ENCODE measurements at regions of chr1 and their contacts with region 1.

Region 1: GRCh38 chr1:77683160-77684148 is 996 bp upstream of the ZZZ3 start:
- DNase-seq: peak; percentile 95
- H3K4me3 Mint-ChIP-seq: peak overlapping the region; percentile 98
- H3K27ac Mint-ChIP-seq: peak overlapping the region; percentile 90
- H3K4me1 Mint-ChIP-seq: peaks cover 32% of the 10 kb centered on the region
- H3K27me3 Mint-ChIP-seq: no peaks in the 10 kb centered on the region

Region 2: DNA sequence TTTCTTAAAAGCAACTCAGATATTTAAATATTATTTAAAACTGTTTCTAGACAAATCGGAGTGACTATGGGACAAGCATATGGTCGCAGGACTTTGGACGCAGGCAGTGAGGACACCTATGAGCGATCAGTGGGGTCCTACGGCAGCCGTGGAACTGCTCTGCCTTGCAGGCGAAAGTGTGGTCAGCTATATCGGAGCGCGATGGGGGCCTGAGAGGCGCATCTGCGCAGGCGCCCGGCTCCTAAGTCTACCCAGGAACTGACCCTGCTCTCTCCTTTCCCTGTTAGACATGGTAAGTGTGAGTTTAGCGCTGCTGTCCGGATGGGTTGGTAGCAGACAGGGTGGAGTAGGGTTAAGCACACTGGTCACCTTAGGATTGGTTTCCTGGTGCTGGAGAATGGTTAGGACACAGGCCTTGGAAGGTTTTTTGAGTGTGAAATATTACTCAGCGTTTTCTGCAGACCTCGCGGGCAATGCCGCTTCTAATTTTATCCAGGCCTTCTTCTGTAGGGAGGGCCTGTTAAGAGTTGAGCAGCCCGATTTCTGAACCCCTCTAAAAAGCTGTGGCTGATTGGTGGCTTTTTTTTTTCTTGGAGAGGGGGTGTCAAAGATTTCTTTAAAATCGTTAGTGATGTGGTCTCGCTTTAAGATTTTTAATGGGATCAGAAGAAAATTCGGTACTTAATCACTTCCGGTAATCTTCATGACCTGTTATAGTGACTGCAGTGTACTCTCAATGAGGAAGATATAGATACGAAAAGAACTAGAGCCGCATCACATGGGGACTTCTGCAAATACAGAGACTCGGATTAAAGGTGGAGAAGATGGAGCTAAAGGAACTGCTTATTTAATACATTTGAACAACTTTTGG is 1897.2 kb before region 1 on chr1 and contains the start of gene RABGGTB:
- CTCF ChIA-PET with region 1: no interaction called
- POLR2A ChIA-PET with region 1: no interaction called
- intact Hi-C with region 1: loop called (anchors 2 kb)
- DNase-seq: peak; percentile 96
- H3K4me3 Mint-ChIP-seq: peak within 1 kb of the TSS; percentile 99
- H3K27ac Mint-ChIP-seq: peak within 1 kb of the TSS; percentile 97
- H3K4me1 Mint-ChIP-seq: peaks cover 28% of the 10 kb centered on the region
- H3K27me3 Mint-ChIP-seq: no peaks in the 10 kb centered on the region
- total RNA-seq, gene RABGGTB: 158 to 170 TPM

Region 3: GRCh38 chr1:77281491-77282186 is 401.8 kb before region 1 on chr1 and contains the start of gene AK5:
- CTCF ChIA-PET with region 1: interaction called, 4 read pairs
- POLR2A ChIA-PET with region 1: no interaction called
- intact Hi-C with region 1: loop called (anchors 10 kb)
- DNase-seq: peak; percentile 56
- H3K4me3 Mint-ChIP-seq: peak within 1 kb of the TSS; percentile 64
- H3K27ac Mint-ChIP-seq: no peak within 1 kb of the TSS
- H3K4me1 Mint-ChIP-seq: peaks cover 21% of the 10 kb centered on the region
- H3K27me3 Mint-ChIP-seq: peaks cover 5% of the 10 kb centered on the region
- total RNA-seq, gene AK5: 1.6 to 2.2 TPM

Region 4: GRCh38 chr1:77639056-77639455 is 44.4 kb before region 1 on chr1:
- CTCF ChIA-PET with region 1: interaction called, 3 read pairs
- POLR2A ChIA-PET with region 1: interaction called, 4 read pairs
- intact Hi-C with region 1: loop called (anchors 2 kb)
- DNase-seq: no peak
- H3K4me3 Mint-ChIP-seq: no peak overlapping the region
- H3K27ac Mint-ChIP-seq: no peak overlapping the region
- H3K4me1 Mint-ChIP-seq: peaks cover 6% of the 10 kb centered on the region
- H3K27me3 Mint-ChIP-seq: no peaks in the 10 kb centered on the region

Region 5: GRCh38 chr1:77779529-77780281 is 96.3 kb after region 1 on chr1 and contains the start of gene MIGA1:
- CTCF ChIA-PET with region 1: interaction called, 3 read pairs
- POLR2A ChIA-PET with region 1: interaction called, 9 read pairs
- intact Hi-C with region 1: loop called (anchors 1 kb)
- DNase-seq: peak; percentile 90
- H3K4me3 Mint-ChIP-seq: peak within 1 kb of the TSS; percentile 87
- H3K27ac Mint-ChIP-seq: peak within 1 kb of the TSS; percentile 80
- H3K4me1 Mint-ChIP-seq: peaks cover 34% of the 10 kb centered on the region
- H3K27me3 Mint-ChIP-seq: no peaks in the 10 kb centered on the region
- total RNA-seq, gene MIGA1: 9.1 to 9.9 TPM

Region 6: DNA sequence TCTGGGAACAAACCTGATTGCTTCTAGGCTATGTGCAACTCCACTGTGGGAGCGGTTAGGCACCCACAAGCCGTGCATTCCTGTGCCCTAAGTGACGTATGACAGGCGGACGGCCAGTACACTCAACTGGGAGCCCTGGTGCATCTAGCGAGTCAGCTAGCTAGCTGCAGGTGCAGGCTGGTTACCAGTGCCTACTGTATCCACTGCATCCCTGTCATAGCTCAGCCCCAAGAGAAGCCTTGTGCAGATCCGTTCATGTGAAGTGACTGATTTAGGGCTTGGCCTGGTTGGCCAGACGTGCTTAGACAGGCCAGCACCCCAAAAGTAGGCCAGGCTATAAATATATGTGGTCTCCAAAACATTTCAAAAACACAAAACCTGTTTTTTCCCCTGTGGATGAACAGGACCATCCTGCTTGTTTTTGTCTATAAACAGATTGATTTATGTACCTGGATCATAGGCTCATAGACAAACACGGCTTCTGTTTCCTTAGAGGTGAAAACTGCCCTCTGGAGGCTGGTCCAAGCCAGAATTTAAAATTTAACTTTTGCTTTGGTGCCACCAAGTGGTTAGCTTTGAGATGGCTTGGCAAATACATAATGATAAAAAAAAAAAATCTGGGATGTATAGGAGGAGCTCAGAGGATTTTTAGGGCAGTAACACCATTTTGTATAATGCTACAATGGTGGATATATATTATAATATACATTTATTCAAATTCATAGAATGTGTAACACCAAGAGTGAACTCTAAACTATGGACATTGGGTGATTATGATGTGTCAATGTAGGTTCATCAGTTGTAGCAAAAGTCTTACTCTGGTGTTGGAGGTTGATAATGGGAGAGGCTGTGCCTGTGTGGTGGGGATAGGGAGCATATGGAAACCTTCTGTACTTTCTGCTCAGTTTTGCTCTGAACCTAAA is 430.8 kb after region 1 on chr1:
- CTCF ChIA-PET with region 1: interaction called, 3 read pairs
- POLR2A ChIA-PET with region 1: interaction called, 3 read pairs
- intact Hi-C with region 1: loop called (anchors 5 kb)
- DNase-seq: peak; percentile 69
- H3K4me3 Mint-ChIP-seq: no peak overlapping the region
- H3K27ac Mint-ChIP-seq: no peak overlapping the region
- H3K4me1 Mint-ChIP-seq: no peaks in the 10 kb centered on the region
- H3K27me3 Mint-ChIP-seq: no peaks in the 10 kb centered on the region

Measured in activated CD4-positive, alpha-beta memory T cell treated with anti-CD3 and anti-CD28 coated beads for 36 hours (primary cell).